Aorta (tissue), 5 donors: ENCODE measurements at regions of chr5 and their contacts with region 1.

Region 1: DNA sequence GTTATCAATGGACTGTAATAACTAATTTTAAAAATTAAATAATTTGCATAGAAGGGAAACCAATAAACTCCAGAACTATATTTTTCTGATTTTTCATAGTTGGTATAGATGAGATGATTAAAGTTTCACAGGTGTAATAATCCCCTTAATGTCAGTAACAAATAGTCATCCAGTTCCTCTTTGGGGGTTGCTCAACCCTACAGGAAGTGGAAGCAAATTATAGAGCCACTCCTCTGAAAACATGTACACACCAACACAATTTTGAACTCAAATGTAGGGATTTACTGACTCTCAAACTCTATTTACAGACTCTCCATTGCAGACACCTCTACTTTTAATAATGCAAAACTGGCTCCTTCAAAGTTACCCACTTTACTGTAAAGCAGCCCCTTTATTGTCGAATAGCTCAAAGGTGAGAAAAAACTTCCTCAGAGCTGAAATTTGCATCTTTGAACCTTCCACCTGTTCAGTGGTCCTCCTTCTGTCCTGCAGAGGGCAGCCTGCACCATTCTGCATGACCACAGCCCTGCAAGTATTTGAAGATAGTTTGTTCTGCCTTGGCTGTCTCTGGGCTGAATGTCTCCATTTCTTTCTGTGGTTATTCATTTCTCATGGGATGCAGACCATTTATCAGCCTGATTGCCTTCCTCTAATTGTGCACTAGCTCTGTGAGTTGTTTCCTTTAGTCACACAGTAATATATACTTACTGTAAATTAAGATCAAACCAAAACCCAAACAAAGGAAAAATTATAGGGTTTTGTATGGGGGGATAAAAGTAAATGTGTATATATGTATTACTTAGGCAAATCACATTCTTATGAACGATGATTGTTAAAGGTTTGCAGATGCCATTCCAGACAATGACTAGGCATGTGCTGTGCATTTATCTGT is 383.2 kb upstream of the SGCD start:
- DNase-seq: peak; percentile 57 to 77
- ATAC-seq: peak; percentile 77
- H3K4me3 ChIP-seq: no peak overlapping the region
- H3K27ac ChIP-seq: no peak overlapping the region
- H3K4me1 ChIP-seq: no peaks in the 10 kb centered on the region
- H3K27me3 ChIP-seq: no peaks in the 10 kb centered on the region

Region 2: DNA sequence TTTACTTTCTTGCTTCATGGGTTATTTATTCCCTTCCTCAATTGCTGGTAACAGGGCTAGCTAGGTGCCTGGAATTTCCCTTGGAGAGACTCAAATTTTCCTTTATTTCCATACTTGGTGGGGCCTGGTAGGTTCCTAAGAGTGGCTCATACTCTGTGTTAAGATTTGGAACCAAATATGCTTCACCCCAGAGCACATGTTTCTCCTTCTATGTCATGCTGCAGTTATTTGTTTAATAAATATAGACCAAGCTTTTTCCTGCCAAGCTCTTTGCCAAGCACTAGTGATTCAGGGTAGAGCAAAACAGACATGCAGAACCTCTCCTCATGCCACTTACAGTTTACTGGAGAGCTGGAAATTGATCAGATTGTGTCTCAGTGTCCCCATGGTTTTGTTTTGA is 92.9 kb after region 1 on chr5:
- intact Hi-C with region 1: loop called in 1 of 2 experiments (anchors 10 kb)
- DNase-seq: no peak
- ATAC-seq: peak; percentile 84
- H3K4me3 ChIP-seq: no peak overlapping the region
- H3K27ac ChIP-seq: peak overlapping the region in 1 of 2 donors; percentile 96
- H3K4me1 ChIP-seq: peaks cover 0 to 5% of the 10 kb centered on the region in 2 donors
- H3K27me3 ChIP-seq: no peaks in the 10 kb centered on the region

Region 3: DNA sequence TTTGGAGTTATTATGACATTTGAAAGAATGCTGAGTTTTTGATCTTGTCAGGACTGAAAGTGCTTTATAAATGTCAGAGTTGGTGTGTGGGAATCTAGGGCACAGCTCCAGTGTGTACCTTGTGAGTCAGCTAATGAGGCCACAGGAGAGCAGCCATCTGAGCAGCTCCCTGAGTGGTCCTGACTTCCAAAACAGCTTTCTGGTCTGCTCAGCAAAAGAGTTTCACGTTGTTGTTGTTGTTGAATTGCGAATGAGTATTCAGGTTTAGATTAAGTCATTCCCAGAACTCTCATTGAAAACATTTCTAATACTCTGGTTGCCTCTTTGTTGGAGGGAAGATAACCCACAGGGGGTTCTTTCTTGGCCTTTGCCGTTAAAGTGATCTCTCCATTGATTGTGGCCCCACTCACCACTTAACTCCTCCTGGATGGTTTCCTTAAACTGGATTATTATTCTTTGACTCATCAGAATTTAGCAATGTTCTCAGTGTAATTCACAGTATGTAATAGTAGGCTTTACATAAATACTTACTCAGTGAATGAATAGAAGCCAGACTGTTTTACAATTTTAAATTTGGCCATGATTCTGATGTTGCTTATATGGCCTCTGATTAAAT is 258.1 kb after region 1 on chr5:
- intact Hi-C with region 1: loop called in 1 of 2 experiments (anchors 10 kb)
- DNase-seq: peak in 1 of 2 donors; percentile 48
- ATAC-seq: no peak
- H3K4me3 ChIP-seq: no peak overlapping the region
- H3K27ac ChIP-seq: no peak overlapping the region
- H3K4me1 ChIP-seq: no peaks in the 10 kb centered on the region
- H3K27me3 ChIP-seq: no peaks in the 10 kb centered on the region

Region 4: DNA sequence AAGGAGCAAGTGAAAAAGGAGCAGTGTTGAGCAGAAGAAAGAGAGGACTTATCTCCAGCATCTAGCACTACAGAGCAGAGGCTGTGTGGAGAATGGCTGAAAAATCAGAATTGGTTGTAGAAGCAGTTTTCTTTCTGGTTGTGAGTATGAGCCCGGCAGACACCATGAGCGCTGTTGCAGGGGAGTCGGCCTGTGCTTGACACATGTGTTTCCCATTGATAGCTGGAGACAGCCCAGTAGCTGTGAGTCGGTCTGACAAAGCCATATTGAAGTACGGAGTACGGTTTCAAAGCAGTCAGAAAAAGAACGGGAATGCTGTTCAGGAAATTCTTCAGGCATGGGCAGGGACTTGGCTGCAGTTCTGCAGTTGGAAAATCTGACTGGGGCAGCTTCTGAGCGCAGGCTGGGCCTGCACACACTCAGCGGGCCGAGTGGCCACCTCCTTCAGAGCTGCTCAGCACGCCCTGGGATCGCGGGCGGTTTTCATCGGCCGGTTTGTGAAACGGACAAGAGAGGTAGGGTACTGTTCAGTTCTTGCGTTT is 383.0 kb after region 1 on chr5 and contains the start of gene SGCD:
- intact Hi-C with region 1: loop called (anchors 10 kb)
- DNase-seq: peak; percentile 84 to 94
- ATAC-seq: peak; percentile 92
- H3K4me3 ChIP-seq: peak within 1 kb of the TSS; percentile 92 to 98
- H3K27ac ChIP-seq: peak within 1 kb of the TSS; percentile 84 to 94
- H3K4me1 ChIP-seq: peaks cover 2 to 14% of the 10 kb centered on the region in 2 donors
- H3K27me3 ChIP-seq: no peaks in the 10 kb centered on the region
- total RNA-seq, gene SGCD: 31.2 to 129 TPM

Region 5: GRCh38 chr5:156815988-156816599 is 872.3 kb after region 1 on chr5:
- intact Hi-C with region 1: loop called (anchors 5 kb)
- DNase-seq: no peak
- ATAC-seq: no peak
- H3K4me3 ChIP-seq: no peak overlapping the region
- H3K27ac ChIP-seq: no peak overlapping the region
- H3K4me1 ChIP-seq: no peaks in the 10 kb centered on the region
- H3K27me3 ChIP-seq: peaks cover 0 to 4% of the 10 kb centered on the region in 2 donors

Region 6: GRCh38 chr5:156824800-156825199 is 881.0 kb after region 1 on chr5:
- intact Hi-C with region 1: loop called (anchors 5 kb)
- DNase-seq: no peak
- ATAC-seq: no peak
- H3K4me3 ChIP-seq: no peak overlapping the region
- H3K27ac ChIP-seq: no peak overlapping the region
- H3K4me1 ChIP-seq: no peaks in the 10 kb centered on the region
- H3K27me3 ChIP-seq: no peaks in the 10 kb centered on the region

Region 7: GRCh38 chr5:157159209-157159751 is 1215.5 kb after region 1 on chr5:
- intact Hi-C with region 1: no loop called
- DNase-seq: no peak
- ATAC-seq: no peak
- H3K4me3 ChIP-seq: no peak overlapping the region
- H3K27ac ChIP-seq: no peak overlapping the region
- H3K4me1 ChIP-seq: no peaks in the 10 kb centered on the region
- H3K27me3 ChIP-seq: no peaks in the 10 kb centered on the region